ENCODE measurements at regions of chr22 and their contacts with region 1.

Region 1: DNA sequence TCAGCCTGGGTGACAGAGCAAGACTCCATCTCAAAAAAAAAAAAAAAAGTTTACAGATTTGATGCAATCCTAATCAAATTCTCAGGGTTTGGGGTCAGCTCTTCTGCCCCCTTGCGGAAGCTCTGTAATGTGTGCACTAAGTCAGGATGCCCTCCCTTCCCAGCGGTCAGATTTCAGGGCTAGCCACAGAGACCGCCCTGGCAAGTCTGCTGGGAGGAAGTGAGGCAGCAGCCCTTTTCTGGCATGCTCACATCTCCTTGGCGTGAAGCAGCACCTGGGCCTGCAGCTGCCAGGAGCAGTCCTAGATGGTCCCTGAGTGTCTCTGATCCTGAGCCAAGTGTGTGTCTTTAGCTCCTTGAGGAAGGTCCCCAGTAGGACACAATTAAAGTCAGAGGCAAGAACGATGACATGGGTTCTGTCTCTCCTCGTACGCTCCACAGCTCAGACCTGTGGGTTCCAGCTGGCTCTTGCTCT is 10.9 kb upstream of the APOBEC3C start:
- DNase-seq: peak; percentile 63 to 78
- ATAC-seq: peak; percentile 74 to 89 (median 83)
- H3K4me3 ChIP-seq: no peak overlapping the region
- H3K27ac ChIP-seq: no peak overlapping the region
- H3K4me1 ChIP-seq: no peaks in the 10 kb centered on the region
- H3K27me3 ChIP-seq: peaks cover 0 to 13% (median 1%) of the 10 kb centered on the region in 3 donors
- CTCF ChIP-seq: peak; percentile 69

Region 2: DNA sequence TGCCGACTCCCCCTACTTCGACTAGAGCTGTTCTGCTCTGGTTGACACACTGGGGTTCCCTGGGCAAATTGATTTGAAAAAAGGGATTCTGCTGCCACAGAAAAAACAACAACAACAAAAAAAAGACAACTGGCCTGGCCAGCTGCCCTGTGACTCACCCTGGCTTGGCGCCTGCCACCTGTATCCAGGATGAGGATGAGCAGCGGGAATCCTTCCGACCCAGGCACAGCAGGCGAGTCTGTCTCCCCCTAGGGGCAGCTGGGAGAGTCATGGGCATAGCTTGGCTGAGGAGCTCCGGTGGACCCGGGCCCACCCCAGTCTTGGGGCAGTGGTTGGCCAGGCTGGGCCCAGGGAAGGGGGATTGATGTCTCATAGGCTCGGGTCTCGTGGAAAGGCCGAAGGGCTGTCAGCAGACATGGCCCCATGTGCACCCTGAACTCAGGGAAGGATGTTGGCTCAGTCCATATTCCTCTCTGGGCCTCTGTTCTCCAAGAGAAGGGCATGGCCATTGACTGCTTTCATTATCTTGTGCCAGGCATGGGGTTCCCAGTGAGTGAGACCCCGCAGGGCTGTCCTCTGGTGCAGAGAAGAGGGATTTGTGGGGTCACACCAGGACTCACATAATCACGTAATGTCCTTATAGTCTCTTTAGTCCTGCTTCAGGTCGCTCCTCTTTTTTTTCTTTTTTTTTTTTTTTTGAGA is 237.0 kb before region 1 on chr22:
- intact Hi-C with region 1: loop called in 1 of 2 experiments (anchors 5 kb)
- DNase-seq: peak; percentile 71 to 84
- ATAC-seq: peak; percentile 75 to 87 (median 84)
- H3K4me3 ChIP-seq: no peak overlapping the region
- H3K27ac ChIP-seq: no peak overlapping the region
- H3K4me1 ChIP-seq: peaks cover 17% of the 10 kb centered on the region
- H3K27me3 ChIP-seq: no peaks in the 10 kb centered on the region
- CTCF ChIP-seq: peak; percentile 76

Region 3: GRCh38 chr22:38872172-38872830 is 130.9 kb before region 1 on chr22 and contains the start of gene CBX6:
- intact Hi-C with region 1: loop called (anchors 1 to 5 kb)
- DNase-seq: peak; percentile 98
- ATAC-seq: peak; percentile 88 to 91 (median 90)
- H3K4me3 ChIP-seq: peak within 1 kb of the TSS; percentile 97
- H3K27ac ChIP-seq: peak within 1 kb of the TSS; percentile 94
- H3K4me1 ChIP-seq: peaks cover 20% of the 10 kb centered on the region
- H3K27me3 ChIP-seq: no peaks in the 10 kb centered on the region
- CTCF ChIP-seq: no peak
- total RNA-seq, gene CBX6: 15.1 to 21.0 (median 17.4) TPM

Region 4: DNA sequence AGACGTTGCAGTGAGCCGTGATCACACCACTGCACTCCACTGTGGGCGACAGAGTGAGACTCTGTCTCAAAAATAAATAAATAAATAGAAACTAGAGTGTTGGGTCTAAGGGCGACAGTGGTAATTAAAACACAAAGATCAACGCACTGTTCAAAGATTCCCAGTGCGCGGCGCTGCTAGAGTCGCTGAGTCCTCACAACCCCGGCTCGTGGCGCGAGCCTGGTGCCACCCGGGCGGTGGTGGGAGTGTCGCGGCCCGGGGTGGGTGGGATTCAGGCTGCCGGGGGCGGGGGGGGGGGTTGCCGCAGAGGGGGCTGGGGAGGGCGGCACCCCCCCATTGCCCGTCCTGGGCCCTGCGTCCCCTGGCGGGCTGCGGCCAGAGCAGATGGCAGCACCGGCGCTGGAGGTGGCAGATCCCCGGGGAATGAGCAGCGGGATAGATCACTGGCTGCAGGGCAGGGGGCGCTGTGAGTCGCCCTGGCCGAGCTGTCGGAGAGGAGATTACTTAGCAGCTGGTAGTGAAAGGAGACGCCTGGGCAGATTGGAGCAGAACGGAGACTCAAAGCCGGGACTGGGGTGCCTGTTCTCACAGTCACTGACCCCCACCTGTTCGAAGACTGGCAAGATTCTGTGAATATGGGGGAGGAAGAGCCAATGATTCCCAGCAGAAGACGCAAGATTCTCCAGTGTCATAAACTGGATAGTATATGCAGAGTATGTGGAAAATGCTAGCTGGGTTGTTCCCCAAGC is 76.0 kb before region 1 on chr22:
- intact Hi-C with region 1: loop called in 1 of 2 experiments (anchors 5 kb)
- DNase-seq: peak; percentile 77 to 85
- ATAC-seq: peak; percentile 79 to 86 (median 84)
- H3K4me3 ChIP-seq: peak overlapping the region; percentile 59
- H3K27ac ChIP-seq: peak overlapping the region; percentile 48
- H3K4me1 ChIP-seq: peaks cover 13% of the 10 kb centered on the region
- H3K27me3 ChIP-seq: peaks cover 0 to 4% (median 0%) of the 10 kb centered on the region in 3 donors
- CTCF ChIP-seq: peak; percentile 63

Region 5: DNA sequence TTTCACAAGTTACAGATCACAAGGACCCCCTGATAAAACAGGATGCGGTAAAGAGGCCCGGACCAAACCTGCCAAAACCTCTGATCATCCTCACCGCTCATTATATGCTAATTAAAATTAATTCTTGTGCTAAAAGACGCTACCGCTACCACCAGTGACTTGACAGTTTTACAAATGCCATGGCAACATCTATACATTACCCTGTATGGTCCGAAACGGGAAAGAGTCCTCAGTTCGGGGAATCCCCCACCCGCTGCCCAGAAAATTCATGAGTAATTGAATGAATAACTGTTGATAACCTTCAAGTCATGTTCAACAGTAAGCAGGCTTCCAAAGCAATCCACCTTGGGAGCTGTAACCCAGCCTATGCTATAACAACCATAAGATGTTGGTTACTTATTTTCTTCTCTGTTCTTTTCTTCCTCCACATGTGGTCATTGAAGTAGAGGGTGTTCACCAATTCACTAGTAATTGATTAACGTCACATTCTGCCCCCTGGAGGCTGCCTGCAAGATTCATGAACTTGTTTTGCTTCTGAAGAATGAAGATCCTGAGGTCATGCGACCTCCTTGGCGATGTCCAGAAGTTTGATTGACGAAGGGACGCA is 114.5 kb after region 1 on chr22:
- intact Hi-C with region 1: loop called in 1 of 2 experiments (anchors 5 kb)
- DNase-seq: peak in 1 of 2 donors; percentile 17
- ATAC-seq: no peak
- H3K4me3 ChIP-seq: no peak overlapping the region
- H3K27ac ChIP-seq: no peak overlapping the region
- H3K4me1 ChIP-seq: no peaks in the 10 kb centered on the region
- H3K27me3 ChIP-seq: peaks cover 0 to 49% (median 7%) of the 10 kb centered on the region in 3 donors
- CTCF ChIP-seq: peak; percentile 19

Region 6: DNA sequence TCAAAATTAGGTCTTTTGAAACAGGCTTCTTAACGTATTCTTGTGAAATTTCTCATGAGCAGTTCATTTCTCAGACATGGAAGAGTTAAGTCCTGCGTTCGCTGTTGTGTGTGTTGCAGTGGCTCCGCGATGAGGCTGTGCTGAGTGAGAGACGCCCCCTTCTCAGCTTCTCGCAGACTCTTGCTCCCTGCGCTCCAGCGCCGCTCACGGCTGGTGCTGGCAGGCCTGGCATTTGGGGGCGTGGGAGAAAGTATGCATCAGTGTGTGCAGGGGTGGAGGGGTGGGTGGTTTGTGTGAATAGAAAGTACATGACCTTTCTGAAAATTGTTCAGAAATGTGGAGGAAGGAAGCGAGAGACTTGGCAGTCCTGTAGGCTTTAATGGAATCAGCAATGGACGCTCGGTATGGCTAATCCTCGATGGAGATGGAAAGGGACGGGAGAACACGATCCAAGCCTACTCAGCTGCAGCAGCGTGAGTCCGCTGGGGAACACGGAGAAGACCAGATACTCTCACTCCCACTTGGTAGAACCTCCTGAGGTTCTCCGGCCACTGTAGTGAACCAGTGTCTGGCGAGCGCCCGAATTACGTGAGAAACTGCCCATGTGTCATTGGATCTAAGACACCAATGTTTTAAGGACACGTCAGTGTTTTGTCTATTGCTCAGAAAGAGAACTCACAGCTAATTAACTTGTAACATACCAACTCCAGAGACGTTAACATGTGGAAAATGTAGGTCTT is 402.3 kb after region 1 on chr22:
- intact Hi-C with region 1: no loop called
- DNase-seq: peak; percentile 50 to 54
- ATAC-seq: peak in 3 of 4 donors; percentile 28 to 56 (median 48)
- H3K4me3 ChIP-seq: no peak overlapping the region
- H3K27ac ChIP-seq: no peak overlapping the region
- H3K4me1 ChIP-seq: peaks cover 42% of the 10 kb centered on the region
- H3K27me3 ChIP-seq: no peaks in the 10 kb centered on the region
- CTCF ChIP-seq: no peak

Measured in psoas muscle (tissue), 8 donors.